ENCODE measurements at regions of chr14 and their contacts with region 1.

Region 1: DNA sequence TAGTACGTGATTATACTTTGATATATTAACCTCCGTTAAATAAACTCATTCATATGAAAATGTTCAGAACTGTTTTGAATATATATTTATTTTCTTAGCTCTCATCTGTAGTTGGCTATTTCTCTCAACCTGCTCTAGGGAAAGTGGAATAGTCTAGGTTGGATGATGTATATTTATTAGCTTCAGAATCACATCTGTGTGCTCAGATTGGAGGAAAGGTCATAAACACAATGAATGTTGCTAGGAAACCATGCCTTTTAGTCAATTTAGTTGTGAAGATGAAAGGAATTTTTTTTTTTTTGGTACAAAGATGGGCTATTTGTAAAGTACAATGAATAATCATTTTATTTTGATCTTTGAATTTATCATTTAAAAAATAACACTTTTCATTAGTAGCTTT is 439.1 kb downstream of the FOXG1 start:
- DNase-seq: no peak
- H3K4me3 ChIP-seq: no peak overlapping the region
- H3K27ac ChIP-seq: no peak overlapping the region
- H3K4me1 ChIP-seq: no peaks in the 10 kb centered on the region
- H3K27me3 ChIP-seq: peaks cover 0 to 2% of the 10 kb centered on the region in 2 experiments
- CTCF ChIP-seq: no peak
- POLR2A ChIP-seq: no peak

Region 2: GRCh38 chr14:29191092-29191491 is 14.6 kb before region 1 on chr14:
- CTCF ChIA-PET with region 1: interaction called, 14 read pairs
- POLR2A ChIA-PET with region 1: no interaction called
- dilution Hi-C with region 1: no loop called
- intact Hi-C with region 1: no loop called
- DNase-seq: no peak
- H3K4me3 ChIP-seq: no peak overlapping the region
- H3K27ac ChIP-seq: no peak overlapping the region
- H3K4me1 ChIP-seq: no peaks in the 10 kb centered on the region
- H3K27me3 ChIP-seq: peaks cover 0 to 2% of the 10 kb centered on the region in 2 experiments
- CTCF ChIP-seq: no peak
- POLR2A ChIP-seq: no peak

Region 3: GRCh38 chr14:29858299-29858698 is 652.6 kb after region 1 on chr14:
- CTCF ChIA-PET with region 1: no interaction called
- POLR2A ChIA-PET with region 1: no interaction called
- dilution Hi-C with region 1: no loop called
- intact Hi-C with region 1: no loop called
- DNase-seq: no peak
- H3K4me3 ChIP-seq: no peak overlapping the region
- H3K27ac ChIP-seq: no peak overlapping the region
- H3K4me1 ChIP-seq: no peaks in the 10 kb centered on the region
- H3K27me3 ChIP-seq: no peaks in the 10 kb centered on the region
- CTCF ChIP-seq: no peak
- POLR2A ChIP-seq: no peak